ENCODE measurements at regions of chr11 and their contacts with region 1.

Region 1: GRCh38 chr11:32029721-32030120 is 61.2 kb upstream of the RCN1 start:
- DNase-seq: no peak
- H3K4me3 ChIP-seq: no peak overlapping the region
- H3K27me3 ChIP-seq: no peaks in the 10 kb centered on the region; the same call in none of the 2 replicates
- CTCF ChIP-seq: no peak

Region 2: DNA sequence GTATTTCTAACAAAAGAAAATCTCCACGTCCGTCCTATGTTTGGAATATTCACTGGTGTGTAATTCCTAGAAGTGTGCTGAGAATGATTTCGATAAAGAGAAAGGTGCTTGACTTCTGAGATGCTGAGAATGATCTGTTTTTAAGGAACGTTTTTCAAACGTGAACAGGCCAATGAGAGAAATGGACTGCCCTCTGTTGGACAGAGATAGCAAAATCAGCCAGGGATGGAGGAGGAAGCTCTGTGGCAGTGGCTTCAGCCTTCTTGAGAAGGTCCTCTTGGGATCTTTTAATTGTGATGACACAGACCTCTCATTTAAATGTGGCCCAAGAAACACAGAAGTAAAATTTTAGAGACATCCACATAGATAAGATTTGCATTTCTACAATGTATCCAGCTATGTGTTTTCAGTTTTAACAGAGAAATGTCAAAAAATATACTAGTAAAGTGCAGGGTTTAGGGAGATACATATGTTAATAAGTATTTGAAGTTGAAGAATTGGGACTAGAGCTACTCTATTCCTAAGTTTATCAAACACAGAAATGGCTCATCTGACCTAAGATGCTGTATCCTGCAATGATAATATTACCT is 22.8 kb before region 1 on chr11:
- CTCF ChIA-PET with region 1: interaction called, 10 read pairs
- POLR2A ChIA-PET with region 1: no interaction called
- DNase-seq: no peak
- H3K4me3 ChIP-seq: no peak overlapping the region
- H3K27me3 ChIP-seq: 0 out of 2 replicates have a peak, but pooled peaks cover 3% of the 10 kb centered on the region
- CTCF ChIP-seq: peak; percentile 80